ENCODE measurements at regions of chr2 and their contacts with region 1.

Region 1: DNA sequence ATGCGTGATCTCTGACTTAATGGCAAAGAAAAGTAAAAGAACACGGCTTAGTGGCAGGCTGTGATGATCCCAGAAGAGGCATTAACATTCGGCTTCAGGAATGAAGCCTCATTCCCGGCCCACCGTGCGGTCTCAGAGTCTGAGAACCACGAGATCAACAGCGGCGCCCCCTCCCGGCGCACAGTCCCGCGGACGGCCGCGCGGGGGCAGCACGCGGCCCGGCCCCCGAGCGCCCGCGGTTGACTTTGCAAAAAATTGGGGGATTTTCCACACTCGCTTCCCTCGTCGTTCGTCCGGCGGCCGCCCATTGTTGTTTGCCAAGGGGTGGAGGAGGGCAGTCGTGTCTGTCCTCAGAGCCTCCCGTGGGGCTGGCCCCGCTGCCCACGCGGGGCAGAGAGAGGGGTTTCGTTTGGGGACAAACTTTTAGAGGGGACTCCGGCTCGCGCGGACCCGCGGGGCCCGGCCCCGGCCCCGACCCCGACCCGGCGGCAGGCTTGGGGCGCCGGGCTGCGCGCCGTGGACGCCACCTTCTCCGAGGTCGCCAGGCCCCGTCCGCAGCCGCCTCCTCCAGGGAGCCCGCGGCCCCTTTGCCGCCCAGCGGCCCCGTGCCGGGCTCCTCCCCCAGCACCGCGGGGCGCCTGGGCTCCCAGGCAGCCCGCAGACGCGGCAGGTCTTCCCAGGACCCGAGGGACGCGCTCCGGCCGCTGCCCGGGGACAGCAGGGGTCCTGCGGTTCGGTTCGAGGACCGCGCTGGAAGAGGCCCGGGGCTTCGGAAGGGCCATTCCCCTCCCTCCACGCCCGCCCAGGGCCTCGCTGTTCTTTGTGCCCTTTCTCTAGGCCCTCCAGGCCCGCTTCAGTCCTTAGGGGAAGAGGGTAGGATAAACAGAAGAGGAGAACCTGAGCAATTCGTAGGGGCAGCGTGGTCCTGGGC is 3.4 kb upstream of the HS6ST1 start:
- DNase-seq: peak; percentile 86
- H3K4me3 Mint-ChIP-seq: peak overlapping the region; percentile 27
- H3K27ac Mint-ChIP-seq: no peak overlapping the region
- H3K4me1 Mint-ChIP-seq: no peaks in the 10 kb centered on the region
- H3K27me3 Mint-ChIP-seq: no peaks in the 10 kb centered on the region
- CTCF ChIP-seq: peak; percentile 87

Region 2: DNA sequence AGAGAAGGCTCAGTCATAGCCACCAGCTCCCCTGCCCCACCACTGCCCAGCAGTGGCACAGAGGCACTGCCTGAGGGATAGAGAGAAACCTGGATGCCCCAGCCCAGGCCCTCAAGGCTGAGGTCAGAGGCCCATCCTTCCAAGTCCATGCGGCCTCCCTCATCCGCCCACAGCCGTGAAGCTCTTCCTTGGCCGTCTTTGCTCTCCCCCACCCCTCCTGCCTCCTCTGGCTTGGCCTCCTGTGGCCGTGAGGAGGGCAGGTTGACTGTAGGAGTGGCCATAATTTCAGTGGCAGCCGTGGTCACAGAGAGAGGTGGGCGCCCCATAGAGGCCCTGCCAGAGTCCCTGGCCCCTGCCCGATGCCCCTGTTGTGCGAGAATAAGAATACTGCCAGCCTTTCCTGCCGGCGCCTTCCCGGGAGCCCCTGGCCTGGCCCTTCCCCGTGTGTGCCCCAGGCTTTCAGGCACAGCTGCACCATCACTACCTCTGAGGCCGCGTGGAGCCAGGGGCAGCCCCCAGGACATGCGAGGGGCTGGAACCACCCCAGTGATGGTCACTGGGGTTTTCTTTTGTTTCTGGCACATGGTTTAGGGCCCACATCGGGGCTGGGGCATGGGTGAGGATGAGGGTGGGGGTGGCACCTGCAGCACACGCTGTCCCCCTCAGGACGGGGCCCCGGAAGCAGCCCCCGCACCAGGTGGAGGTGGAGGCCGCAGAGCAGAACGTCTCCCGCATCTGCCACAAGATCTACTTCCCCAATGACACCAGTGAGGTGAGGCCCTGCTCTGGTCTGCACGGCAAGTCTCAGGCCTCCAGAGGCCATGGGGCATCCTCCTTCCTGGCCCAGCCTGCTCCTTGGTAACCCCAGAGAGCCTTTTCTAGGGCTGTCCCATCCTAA is 689.2 kb before region 1 on chr2:
- CTCF ChIA-PET with region 1: no interaction called
- intact Hi-C with region 1: no loop called
- DNase-seq: no peak
- H3K4me3 Mint-ChIP-seq: no peak overlapping the region
- H3K27ac Mint-ChIP-seq: peak overlapping the region; percentile 30
- H3K4me1 Mint-ChIP-seq: no peaks in the 10 kb centered on the region
- H3K27me3 Mint-ChIP-seq: no peaks in the 10 kb centered on the region
- CTCF ChIP-seq: no peak

Region 3: GRCh38 chr2:128531856-128532255 is 209.8 kb after region 1 on chr2:
- CTCF ChIA-PET with region 1: no interaction called
- intact Hi-C with region 1: loop called (anchors 5 kb)
- DNase-seq: no peak
- H3K4me3 Mint-ChIP-seq: no peak overlapping the region
- H3K27ac Mint-ChIP-seq: no peak overlapping the region
- H3K4me1 Mint-ChIP-seq: peaks cover 18% of the 10 kb centered on the region
- H3K27me3 Mint-ChIP-seq: no peaks in the 10 kb centered on the region
- CTCF ChIP-seq: no peak

Region 4: GRCh38 chr2:128754246-128754724 is 432.2 kb after region 1 on chr2:
- CTCF ChIA-PET with region 1: no interaction called
- intact Hi-C with region 1: loop called (anchors 2 kb)
- DNase-seq: no peak
- H3K4me3 Mint-ChIP-seq: no peak overlapping the region
- H3K27ac Mint-ChIP-seq: no peak overlapping the region
- H3K4me1 Mint-ChIP-seq: no peaks in the 10 kb centered on the region
- H3K27me3 Mint-ChIP-seq: peaks cover 39% of the 10 kb centered on the region
- CTCF ChIP-seq: no peak

Region 5: DNA sequence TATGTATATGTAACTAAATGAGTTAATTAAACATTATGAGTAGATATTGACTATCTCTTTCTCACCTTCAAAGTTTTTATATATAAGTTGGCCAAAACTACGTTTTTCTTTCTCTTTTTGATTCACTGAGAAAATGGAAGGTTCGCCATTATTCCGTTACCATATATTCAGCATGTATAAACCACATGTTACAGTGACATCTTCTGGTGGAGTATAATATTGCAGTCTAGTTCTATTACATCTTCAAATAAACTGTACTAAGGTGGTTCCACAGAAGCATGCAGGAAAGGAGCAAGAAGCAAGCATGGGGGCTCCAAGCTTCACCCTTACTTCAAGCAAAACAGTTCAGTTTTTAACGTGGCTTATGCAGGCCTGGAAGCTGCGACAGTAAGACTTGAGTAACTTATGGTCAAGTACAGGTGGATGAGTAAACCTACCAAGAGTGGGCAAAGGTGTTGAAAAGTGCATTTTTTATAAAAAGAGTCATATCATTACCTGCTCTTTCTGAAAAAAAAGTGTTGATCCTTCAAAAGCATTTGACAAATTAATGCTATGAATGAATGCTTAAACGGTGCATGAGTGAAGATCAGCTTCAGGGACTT is 1527.6 kb after region 1 on chr2:
- CTCF ChIA-PET with region 1: no interaction called
- intact Hi-C with region 1: loop called (anchors 5 kb)
- DNase-seq: no peak
- H3K4me3 Mint-ChIP-seq: no peak overlapping the region
- H3K27ac Mint-ChIP-seq: no peak overlapping the region
- H3K4me1 Mint-ChIP-seq: no peaks in the 10 kb centered on the region
- H3K27me3 Mint-ChIP-seq: no peaks in the 10 kb centered on the region
- CTCF ChIP-seq: peak; percentile 25

Measured in Calu3 (cell line).